ENCODE measurements at regions of chr14 and their contacts with region 1.

Region 1: DNA sequence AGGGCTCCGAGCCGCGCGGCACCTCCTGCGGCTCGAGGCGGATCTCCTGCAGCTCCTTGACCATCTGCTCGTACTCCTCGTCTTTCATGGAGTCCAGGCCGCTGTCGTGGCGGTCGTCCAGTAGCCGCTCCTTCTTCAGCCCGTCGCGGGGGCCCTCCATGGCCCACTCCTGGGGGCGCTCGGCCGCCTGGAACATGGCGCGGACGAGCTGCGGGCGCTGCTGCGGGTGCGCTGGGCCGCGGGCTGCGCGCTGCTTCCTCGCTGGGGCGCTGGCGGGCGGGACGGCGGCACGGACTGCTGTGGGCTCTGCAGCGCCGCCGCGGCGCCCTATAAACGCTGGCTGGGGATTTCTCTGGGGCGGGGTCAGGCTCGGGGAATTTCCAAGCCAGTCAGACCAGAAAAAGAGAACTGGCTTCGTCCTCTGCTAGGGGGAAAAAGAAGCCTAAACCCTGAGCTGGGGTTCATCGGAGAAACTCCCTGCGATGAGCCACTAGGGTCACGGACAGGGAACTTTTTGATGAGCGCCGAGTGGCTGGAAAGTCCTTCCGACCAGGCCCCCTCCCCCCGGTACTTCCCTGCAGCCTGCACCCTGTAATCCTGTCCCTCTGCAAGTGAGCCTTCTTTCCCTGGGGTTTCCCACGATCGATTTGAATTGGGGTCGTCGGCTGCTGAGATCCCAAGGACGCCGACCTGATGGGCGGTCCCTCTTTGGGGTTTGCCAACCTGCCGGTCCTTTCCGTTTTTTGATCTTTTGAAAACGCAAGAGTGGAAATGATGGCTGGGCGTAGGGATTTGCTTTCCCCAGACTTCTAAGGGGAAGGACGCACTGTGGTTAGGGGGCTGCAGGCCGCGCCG is at the start of gene NFKBIA:
- DNase-seq: peak; percentile 93 to 97
- H3K4me3 ChIP-seq: peak within 1 kb of the TSS; percentile 72 to 97 (median 86)
- H3K27ac ChIP-seq: peak within 1 kb of the TSS; percentile 97 to 100 (median 99)
- H3K4me1 ChIP-seq: peaks cover 39 to 57% (median 48%) of the 10 kb centered on the region in 4 donors
- H3K27me3 ChIP-seq: no peaks in the 10 kb centered on the region
- CTCF ChIP-seq: peak in 3 of 7 experiments; percentile 2 to 38 (median 26)
- EP300 ChIP-seq: no peak
- POLR2A ChIP-seq: peak in 1 of 4 donors; percentile 48
- total RNA-seq, gene NFKBIA: 166 to 605 (median 226) TPM

Region 2: DNA sequence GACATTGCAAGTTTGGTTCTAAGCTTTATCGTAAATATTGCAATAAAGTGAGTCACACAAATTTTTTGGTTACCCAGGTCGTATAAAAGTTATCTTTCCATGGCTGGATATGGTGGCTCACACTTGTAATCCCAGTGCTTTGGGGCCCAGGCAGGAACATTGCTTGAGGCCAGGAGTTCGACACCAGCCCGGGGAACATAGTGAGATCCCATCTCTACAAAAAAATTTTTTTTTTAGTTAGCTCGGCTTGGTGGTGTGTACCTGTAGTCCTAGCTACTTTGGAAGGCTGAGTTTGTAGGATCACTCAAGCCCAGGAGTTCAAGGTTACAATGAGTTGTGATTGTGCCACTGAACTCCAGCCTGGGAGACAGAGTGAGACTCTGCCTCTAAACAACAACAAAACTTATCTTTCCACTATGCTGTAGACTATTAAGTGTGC is 257.9 kb before region 1 on chr14:
- intact Hi-C with region 1: no loop called
- DNase-seq: no peak
- H3K4me3 ChIP-seq: no peak overlapping the region
- H3K27ac ChIP-seq: no peak overlapping the region
- H3K4me1 ChIP-seq: no peaks in the 10 kb centered on the region
- H3K27me3 ChIP-seq: no peaks in the 10 kb centered on the region
- CTCF ChIP-seq: no peak
- EP300 ChIP-seq: no peak
- POLR2A ChIP-seq: no peak

Region 3: DNA sequence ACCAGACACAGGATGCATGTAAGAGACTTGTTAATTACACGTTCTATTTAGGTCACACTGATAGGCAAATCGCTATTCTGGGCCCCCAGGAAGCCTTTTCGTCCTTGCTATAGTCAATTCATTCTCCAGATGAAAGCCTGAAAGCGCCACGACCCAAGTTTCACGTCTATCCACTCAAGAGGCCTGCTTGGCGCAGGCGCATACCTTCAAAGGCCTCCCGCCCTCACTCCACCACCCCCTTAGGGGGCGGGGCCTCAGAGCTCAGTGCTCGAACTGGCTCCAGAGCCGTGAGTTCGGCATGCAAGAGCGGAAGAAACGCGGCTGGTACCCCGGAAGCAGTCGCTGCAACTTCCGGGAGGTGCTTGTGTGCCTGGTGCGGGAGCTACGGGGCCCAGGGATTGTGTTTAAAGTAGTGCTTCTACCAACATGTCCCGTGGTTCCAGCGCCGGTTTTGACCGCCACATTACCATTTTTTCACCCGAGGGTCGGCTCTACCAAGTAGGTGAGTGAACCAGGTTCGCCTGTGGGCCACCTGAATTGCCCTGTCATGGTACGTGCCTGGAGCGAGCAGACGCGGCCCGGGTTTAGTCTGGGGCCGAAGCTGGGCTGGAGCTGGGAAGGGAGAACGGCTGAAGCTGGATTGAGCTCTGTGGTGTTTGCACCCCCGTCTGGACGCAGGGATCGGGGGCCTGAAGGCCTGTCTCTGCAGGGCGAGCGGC is 112.5 kb before region 1 on chr14 and contains the start of gene PSMA6:
- intact Hi-C with region 1: loop called (anchors 10 kb)
- DNase-seq: peak; percentile 99 to 100
- H3K4me3 ChIP-seq: peak within 1 kb of the TSS; percentile 73 to 84 (median 77)
- H3K27ac ChIP-seq: peak within 1 kb of the TSS; percentile 89 to 94 (median 92)
- H3K4me1 ChIP-seq: peaks cover 34 to 58% (median 48%) of the 10 kb centered on the region in 4 donors
- H3K27me3 ChIP-seq: no peaks in the 10 kb centered on the region
- CTCF ChIP-seq: no peak
- EP300 ChIP-seq: no peak
- POLR2A ChIP-seq: peak in 1 of 4 donors; percentile 5
- total RNA-seq, gene PSMA6: 10.7 to 178 (median 62.7) TPM

Region 4: GRCh38 chr14:35336494-35337268 is 68.0 kb before region 1 on chr14:
- intact Hi-C with region 1: loop called (anchors 10 kb)
- DNase-seq: peak; percentile 92 to 94
- H3K4me3 ChIP-seq: no peak overlapping the region
- H3K27ac ChIP-seq: peak overlapping the region; percentile 87 to 96 (median 90)
- H3K4me1 ChIP-seq: peaks cover 73 to 94% (median 91%) of the 10 kb centered on the region in 4 donors
- H3K27me3 ChIP-seq: no peaks in the 10 kb centered on the region
- CTCF ChIP-seq: no peak
- EP300 ChIP-seq: peak; percentile 88
- POLR2A ChIP-seq: peak in 1 of 4 donors; percentile 9

Measured in stomach (tissue), 19 donors.